A549 (cell line): ENCODE measurements at regions of chr3 and their contacts with region 1.

Region 1: DNA sequence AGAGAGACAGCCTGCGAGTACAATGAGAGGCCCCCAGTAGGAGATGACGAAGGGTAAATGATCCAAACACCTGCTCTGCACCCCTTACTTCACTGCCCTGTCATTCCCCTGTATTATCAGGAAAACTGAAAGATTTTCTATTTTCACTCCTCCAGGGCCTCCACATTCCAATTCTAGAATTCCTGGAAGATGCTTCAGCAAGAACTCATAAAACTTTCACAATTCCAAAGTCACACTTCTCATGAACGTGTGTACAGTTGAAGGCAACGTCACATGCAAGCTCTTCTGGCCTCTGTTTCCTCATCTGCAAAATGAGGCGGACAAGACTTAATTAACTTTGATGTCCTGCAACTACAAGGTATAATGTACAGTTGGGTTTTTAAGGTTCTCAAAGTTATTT is 62.8 kb upstream of the SPATA12 start:
- DNase-seq: no peak
- ATAC-seq: no peak
- H3K4me3 ChIP-seq: no peak overlapping the region
- H3K27ac ChIP-seq: peak overlapping the region in 1 of 2 experiments; percentile 37; a peak in 1 of 6 replicates
- H3K4me1 ChIP-seq: peaks cover 14% of the 10 kb centered on the region; the same call in 2 of the 3 replicates
- CTCF ChIP-seq: no peak
- EP300 ChIP-seq: no peak
- POLR2A ChIP-seq: no peak
- RAD21 ChIP-seq: no peak

Region 2: DNA sequence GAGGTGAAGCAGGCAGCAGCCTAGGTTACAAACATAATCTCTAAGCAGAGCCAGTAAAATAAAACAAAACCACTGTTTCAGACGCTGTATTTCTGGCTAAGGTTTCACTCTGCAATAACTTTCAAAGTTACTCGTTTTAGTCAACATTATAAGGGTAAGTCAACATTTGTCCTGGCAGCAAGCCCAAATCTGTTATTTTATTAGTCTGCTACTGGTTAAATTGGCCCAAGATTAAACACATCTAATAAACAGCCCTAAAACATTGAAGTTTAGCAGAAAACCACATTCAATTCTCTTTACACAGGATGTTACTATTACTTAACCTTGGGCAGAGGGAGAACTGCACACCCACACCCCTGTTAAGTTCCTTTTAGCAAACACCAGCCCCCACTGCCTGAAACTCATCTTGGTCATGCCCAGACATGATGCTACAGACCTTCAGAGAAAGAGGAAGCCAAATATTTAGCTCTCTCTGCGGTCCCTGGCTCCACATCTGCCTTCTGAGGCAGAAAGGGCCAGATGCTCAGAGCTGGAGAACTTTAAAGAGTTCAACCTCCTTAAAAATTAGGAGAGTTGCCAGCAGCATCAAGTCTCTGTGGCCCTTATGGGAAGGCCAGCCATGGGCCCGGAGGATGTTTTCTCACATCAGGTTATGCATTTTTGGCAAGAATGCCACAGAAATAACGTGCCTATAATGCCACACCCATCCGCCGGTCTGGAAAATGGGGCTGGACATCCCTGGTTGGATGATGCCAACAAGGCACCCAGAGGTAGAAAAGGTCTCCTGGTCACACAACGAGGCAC is 213.8 kb before region 1 on chr3:
- CTCF ChIA-PET with region 1: interaction called, 13 read pairs
- POLR2A ChIA-PET with region 1: no interaction called
- DNase-seq: peak; percentile 8 to 66
- ATAC-seq: peak; percentile 77 to 83
- H3K4me3 ChIP-seq: no peak overlapping the region
- H3K27ac ChIP-seq: peak overlapping the region; percentile 69 to 76
- H3K4me1 ChIP-seq: peaks cover 30% of the 10 kb centered on the region
- CTCF ChIP-seq: no peak
- EP300 ChIP-seq: no peak
- POLR2A ChIP-seq: no peak
- RAD21 ChIP-seq: no peak

Region 3: GRCh38 chr3:57012847-57013246 is 15.2 kb after region 1 on chr3:
- CTCF ChIA-PET with region 1: interaction called, 44 read pairs
- POLR2A ChIA-PET with region 1: no interaction called
- DNase-seq: no peak
- ATAC-seq: no peak
- H3K4me3 ChIP-seq: no peak overlapping the region
- H3K27ac ChIP-seq: no peak overlapping the region
- H3K4me1 ChIP-seq: peaks cover 27% of the 10 kb centered on the region
- CTCF ChIP-seq: no peak
- EP300 ChIP-seq: no peak
- POLR2A ChIP-seq: no peak
- RAD21 ChIP-seq: no peak

Region 4: DNA sequence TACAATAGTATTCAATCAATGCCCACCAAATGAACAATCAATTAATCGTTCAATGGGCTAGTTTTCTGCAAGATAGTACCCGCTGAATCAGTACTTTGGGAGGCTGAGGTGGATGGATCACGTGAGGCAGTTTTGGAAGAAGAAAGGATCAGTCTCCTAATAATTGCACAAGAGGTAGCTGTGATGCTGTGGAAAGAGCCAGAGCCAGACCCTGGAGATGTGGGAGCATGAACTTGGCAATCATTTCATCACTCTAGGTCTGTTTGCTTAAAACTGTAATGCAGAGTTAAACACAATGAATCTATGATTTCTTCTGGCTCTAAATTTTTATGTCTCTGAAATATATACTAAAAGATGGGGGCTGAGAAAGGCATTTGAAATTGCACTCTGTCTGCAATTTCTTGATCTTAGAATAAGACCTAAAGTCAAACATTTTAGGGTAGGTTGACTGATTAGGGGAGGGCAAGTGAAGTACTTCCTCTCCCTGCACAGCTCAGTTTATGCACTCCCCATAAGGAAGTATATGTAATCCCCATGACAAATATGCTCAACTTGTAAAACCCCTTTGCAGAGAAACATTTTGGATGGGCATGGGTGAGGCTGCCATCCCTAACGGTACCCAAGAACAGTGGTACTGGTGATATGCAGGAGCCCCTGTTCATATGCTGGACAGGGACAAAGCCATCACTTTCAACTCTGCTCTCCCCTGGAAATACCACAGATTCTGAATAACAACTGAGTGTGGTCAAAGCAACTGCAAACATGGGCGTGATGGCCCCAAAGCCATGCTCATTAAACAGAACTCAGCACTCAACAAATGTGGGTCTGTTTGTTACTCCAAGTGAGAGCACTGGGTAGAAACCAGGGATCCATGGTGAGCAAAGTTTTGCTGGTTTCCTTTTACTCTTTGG is 34.2 kb after region 1 on chr3:
- CTCF ChIA-PET with region 1: no interaction called
- POLR2A ChIA-PET with region 1: no interaction called
- DNase-seq: no peak
- ATAC-seq: no peak
- H3K4me3 ChIP-seq: no peak overlapping the region
- H3K27ac ChIP-seq: no peak overlapping the region
- H3K4me1 ChIP-seq: no peaks in the 10 kb centered on the region
- CTCF ChIP-seq: no peak
- EP300 ChIP-seq: no peak
- POLR2A ChIP-seq: no peak
- RAD21 ChIP-seq: no peak

Region 5: DNA sequence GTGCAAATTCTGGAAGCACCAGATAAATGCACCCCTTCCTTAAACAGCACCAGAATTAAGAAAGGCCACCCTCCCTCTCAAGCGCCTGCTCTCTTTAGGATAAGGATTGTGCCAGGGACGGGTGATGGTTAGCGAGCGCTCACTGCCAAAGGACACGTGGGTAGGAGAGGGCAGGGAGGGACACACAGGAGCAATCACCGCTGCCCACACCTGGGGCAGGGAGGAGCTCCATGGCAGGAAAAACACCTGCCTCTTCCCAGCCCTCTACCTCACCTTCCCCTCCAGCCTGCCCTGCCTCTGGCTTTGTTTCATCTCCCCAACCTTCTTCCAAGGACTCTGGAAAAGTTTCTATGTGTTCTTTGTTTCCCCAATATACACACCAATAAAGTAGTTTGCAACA is 55.4 kb after region 1 on chr3:
- CTCF ChIA-PET with region 1: no interaction called
- POLR2A ChIA-PET with region 1: no interaction called
- DNase-seq: no peak
- ATAC-seq: no peak
- H3K4me3 ChIP-seq: no peak overlapping the region
- H3K27ac ChIP-seq: no peak overlapping the region
- H3K4me1 ChIP-seq: 0 out of 3 replicates have a peak, but pooled peaks cover 4% of the 10 kb centered on the region
- CTCF ChIP-seq: no peak
- EP300 ChIP-seq: no peak
- POLR2A ChIP-seq: no peak
- RAD21 ChIP-seq: no peak

Region 6: DNA sequence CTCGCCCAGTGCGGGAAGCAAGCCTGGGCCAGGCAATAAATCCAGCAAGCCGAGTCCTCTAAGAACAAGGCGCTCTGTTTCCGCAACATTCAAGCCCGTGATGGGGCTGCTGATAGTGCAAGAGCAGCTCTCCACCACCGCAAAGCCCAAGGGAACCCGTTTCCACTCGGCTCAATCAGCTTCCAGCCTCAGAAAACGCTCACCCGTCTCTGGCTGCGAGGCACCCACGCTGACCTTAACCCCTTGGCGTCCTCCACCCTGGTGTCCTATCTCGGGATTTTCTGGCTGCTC is 80.6 kb after region 1 on chr3:
- CTCF ChIA-PET with region 1: interaction called, 18 read pairs
- POLR2A ChIA-PET with region 1: no interaction called
- DNase-seq: peak in 1 of 2 experiments; percentile 44
- ATAC-seq: peak in 1 of 2 experiments; percentile 51; a peak in 2 of 6 replicates
- H3K4me3 ChIP-seq: peak overlapping the region; percentile 99
- H3K27ac ChIP-seq: peak overlapping the region; percentile 94 to 99
- H3K4me1 ChIP-seq: peaks cover 20% of the 10 kb centered on the region; the same call in 1 of the 3 replicates
- CTCF ChIP-seq: no peak
- EP300 ChIP-seq: no peak
- POLR2A ChIP-seq: no peak
- RAD21 ChIP-seq: no peak

Region 7: GRCh38 chr3:57100046-57100695 is 102.5 kb after region 1 on chr3:
- CTCF ChIA-PET with region 1: interaction called, 16 read pairs
- POLR2A ChIA-PET with region 1: no interaction called
- DNase-seq: peak; percentile 33 to 60
- ATAC-seq: peak; percentile 76 to 91
- H3K4me3 ChIP-seq: no peak overlapping the region
- H3K27ac ChIP-seq: no peak overlapping the region
- H3K4me1 ChIP-seq: no peaks in the 10 kb centered on the region
- CTCF ChIP-seq: peak; percentile 76
- EP300 ChIP-seq: no peak
- POLR2A ChIP-seq: no peak
- RAD21 ChIP-seq: peak; percentile 81 to 85